ENCODE measurements at regions of chr15 and their contacts with region 1.

Region 1: GRCh38 chr15:43285609-43286037 is 18.9 kb upstream of the TGM5 start:
- DNase-seq: peak; percentile 67
- ATAC-seq: peak; percentile 80
- H3K4me3 Mint-ChIP-seq: no peak overlapping the region
- H3K27ac Mint-ChIP-seq: no peak overlapping the region
- H3K4me1 Mint-ChIP-seq: peaks cover 6% of the 10 kb centered on the region
- H3K27me3 Mint-ChIP-seq: peaks cover 14% of the 10 kb centered on the region

Region 2: DNA sequence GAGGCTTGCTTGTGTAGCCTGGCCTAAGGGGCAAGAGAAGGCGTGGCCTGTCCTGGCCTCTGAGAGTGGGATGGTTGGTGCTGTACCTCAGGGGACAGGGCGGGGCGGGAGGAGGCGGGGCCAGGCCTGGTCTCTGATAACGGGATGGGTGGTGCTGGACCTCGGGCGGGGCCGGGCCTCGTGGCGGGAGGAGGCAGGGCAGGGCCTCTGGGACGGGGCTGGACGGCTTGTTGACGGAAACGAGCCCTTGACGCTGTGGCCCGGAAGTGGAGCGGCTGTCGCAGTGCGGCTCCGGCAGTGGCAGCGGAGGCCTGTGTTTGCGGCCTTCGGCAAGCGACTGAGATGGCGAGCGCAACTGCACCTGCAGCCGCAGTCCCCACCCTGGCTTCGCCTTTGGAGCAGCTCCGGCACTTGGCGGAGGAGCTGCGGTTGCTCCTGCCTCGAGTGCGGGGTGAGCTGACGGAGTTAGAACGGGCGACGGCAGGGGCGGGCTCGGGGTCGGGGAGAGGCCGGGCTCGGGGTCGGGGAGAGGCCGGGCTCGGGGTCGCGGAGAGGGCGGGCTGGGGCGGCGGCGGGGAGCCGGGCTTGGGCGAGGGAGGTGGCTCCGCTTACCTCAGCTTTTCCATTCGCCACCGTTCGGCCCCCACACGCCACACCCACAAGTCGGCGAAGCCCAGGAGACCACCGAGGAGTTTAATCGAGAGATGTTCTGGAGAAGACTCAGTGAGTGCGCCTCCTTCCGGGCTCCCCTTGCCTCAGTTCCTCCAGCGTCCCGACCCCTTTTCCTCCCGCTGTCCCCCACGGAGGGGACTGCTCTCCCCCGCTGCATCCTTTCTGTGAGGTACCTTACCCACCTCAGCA is 100.2 kb before region 1 on chr15 and contains the start of gene CCNDBP1:
- CTCF ChIA-PET with region 1: interaction called, 10 read pairs
- DNase-seq: peak; percentile 98
- ATAC-seq: peak; percentile 95
- H3K4me3 Mint-ChIP-seq: peak within 1 kb of the TSS; percentile 94
- H3K27ac Mint-ChIP-seq: peak within 1 kb of the TSS; percentile 96
- H3K4me1 Mint-ChIP-seq: peaks cover 38% of the 10 kb centered on the region
- H3K27me3 Mint-ChIP-seq: no peaks in the 10 kb centered on the region
- total RNA-seq, gene CCNDBP1: 60.5 to 78.4 TPM

Region 3: GRCh38 chr15:43194795-43195194 is 90.8 kb before region 1 on chr15:
- CTCF ChIA-PET with region 1: interaction called, 12 read pairs
- DNase-seq: no peak
- ATAC-seq: no peak
- H3K4me3 Mint-ChIP-seq: no peak overlapping the region
- H3K27ac Mint-ChIP-seq: no peak overlapping the region
- H3K4me1 Mint-ChIP-seq: peaks cover 8% of the 10 kb centered on the region
- H3K27me3 Mint-ChIP-seq: no peaks in the 10 kb centered on the region

Region 4: GRCh38 chr15:43204016-43204901 is 81.4 kb before region 1 on chr15:
- CTCF ChIA-PET with region 1: interaction called, 10 read pairs
- DNase-seq: peak; percentile 72
- ATAC-seq: peak; percentile 73
- H3K4me3 Mint-ChIP-seq: no peak overlapping the region
- H3K27ac Mint-ChIP-seq: no peak overlapping the region
- H3K4me1 Mint-ChIP-seq: peaks cover 17% of the 10 kb centered on the region
- H3K27me3 Mint-ChIP-seq: peaks cover 13% of the 10 kb centered on the region

Region 5: GRCh38 chr15:43241100-43241499 is 44.5 kb before region 1 on chr15:
- CTCF ChIA-PET with region 1: interaction called, 16 read pairs
- DNase-seq: no peak
- ATAC-seq: no peak
- H3K4me3 Mint-ChIP-seq: no peak overlapping the region
- H3K27ac Mint-ChIP-seq: no peak overlapping the region
- H3K4me1 Mint-ChIP-seq: peaks cover 28% of the 10 kb centered on the region
- H3K27me3 Mint-ChIP-seq: peaks cover 4% of the 10 kb centered on the region

Region 6: DNA sequence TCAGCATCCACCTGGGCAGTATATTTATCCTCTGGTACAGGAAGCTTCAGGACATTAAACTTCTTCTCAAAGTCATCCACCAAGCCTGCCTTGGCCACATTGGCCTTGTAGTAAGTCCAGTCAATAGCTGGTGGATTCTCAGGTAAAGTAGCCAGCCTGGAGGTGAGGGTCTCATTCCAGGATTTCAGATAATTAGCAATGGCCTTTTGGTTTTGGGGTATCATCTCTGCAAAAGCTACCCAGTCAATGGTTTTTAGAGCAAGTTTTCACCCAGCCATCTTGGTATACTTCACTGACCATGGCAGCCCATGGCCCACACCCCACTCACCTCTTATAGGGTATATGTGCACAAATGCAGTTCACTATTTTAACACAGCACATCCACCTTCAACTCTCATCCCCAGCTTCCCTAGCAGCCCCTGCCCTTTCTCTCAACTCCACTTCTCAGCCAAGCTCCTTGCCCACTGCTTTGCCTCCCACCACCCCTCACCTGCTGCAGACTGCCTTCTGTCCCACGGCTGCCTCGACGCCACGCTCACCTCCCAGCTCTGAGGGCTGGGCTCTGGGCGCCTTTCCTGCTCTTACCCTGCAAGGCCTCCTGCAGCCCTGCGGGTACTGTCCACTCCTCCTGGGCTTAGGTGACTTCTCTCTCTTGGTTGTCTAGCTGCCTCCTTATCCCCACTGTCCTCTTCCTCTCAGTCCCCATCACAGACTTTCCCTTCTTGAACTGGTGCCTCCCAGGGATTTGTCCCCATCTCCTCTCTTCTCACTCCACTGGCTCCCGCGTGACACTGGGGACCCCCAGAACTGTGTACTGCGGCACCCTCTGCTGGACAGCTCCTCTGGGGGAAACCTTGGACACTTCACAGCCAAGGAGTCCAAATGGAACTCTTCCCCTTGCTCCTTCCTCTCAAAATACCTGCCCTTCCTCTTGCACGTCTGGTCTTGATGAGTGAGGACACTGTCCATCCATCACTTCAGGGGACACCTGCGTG is 17.2 kb before region 1 on chr15:
- CTCF ChIA-PET with region 1: interaction called, 18 read pairs
- DNase-seq: peak; percentile 61
- ATAC-seq: no peak
- H3K4me3 Mint-ChIP-seq: no peak overlapping the region
- H3K27ac Mint-ChIP-seq: no peak overlapping the region
- H3K4me1 Mint-ChIP-seq: peaks cover 9% of the 10 kb centered on the region
- H3K27me3 Mint-ChIP-seq: peaks cover 47% of the 10 kb centered on the region

Region 7: GRCh38 chr15:43406189-43406588 is 120.6 kb after region 1 on chr15:
- CTCF ChIA-PET with region 1: no interaction called
- DNase-seq: no peak
- ATAC-seq: no peak
- H3K4me3 Mint-ChIP-seq: no peak overlapping the region
- H3K27ac Mint-ChIP-seq: no peak overlapping the region
- H3K4me1 Mint-ChIP-seq: no peaks in the 10 kb centered on the region
- H3K27me3 Mint-ChIP-seq: no peaks in the 10 kb centered on the region

Region 8: GRCh38 chr15:43446344-43446743 is 160.7 kb after region 1 on chr15:
- CTCF ChIA-PET with region 1: no interaction called
- DNase-seq: no peak
- ATAC-seq: no peak
- H3K4me3 Mint-ChIP-seq: no peak overlapping the region
- H3K27ac Mint-ChIP-seq: no peak overlapping the region
- H3K4me1 Mint-ChIP-seq: peaks cover 13% of the 10 kb centered on the region
- H3K27me3 Mint-ChIP-seq: no peaks in the 10 kb centered on the region